ENCODE measurements at regions of chrX and their contacts with region 1.

Region 1: DNA sequence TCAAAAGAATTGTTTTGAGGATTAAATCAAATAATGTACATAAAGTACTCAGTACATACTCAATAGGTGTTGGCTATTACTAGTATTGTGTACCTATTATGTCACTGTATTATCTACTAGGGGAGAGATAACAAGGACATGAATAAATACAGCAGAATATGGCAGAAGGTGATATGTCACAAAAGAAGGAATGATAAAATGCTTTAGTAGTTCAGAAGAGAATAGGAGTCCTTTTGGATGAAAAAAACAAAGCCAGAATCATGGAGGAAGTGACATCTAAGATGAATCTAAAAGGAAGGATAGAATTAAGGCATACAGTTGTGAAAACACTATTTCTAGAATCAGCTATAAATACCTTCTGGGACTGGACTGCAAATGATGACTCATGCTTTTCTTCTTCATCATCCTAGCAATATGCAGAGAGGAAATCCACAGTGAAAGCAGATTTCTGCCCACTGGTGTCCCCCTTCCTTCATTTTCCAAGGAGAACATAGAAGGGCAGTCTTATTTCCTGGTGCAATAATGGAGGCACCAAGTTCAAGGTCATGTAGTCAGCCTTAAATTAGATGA is 98.7 kb downstream of the GLUD2 start:
- DNase-seq: no peak
- ATAC-seq: no peak
- H3K4me3 ChIP-seq: no peak overlapping the region
- H3K27ac ChIP-seq: no peak overlapping the region
- H3K4me1 ChIP-seq: no peaks in the 10 kb centered on the region
- H3K27me3 ChIP-seq: no peaks in the 10 kb centered on the region

Region 2: DNA sequence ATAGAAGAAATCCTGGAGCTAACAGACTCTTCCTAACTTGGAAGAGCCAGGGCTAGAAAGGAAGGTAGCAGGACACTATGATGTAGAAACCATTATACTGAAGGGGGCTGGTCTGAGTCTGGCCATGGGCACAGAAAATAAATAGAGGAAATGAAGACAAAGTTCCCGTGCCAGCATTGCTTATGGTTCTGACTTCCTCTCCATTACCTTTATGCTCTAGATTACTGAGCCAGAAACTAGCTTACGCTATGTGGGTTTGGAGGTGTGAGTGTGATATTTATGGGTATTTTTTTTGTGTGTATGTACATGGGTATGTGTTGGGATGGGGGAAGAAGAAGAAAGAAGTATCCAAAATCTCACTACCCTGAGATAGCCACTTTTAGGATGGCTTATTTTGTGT is 49.6 kb after region 1 on chrX:
- intact Hi-C with region 1: loop called in 1 of 2 experiments (anchors 2 kb)
- DNase-seq: no peak
- ATAC-seq: no peak
- H3K4me3 ChIP-seq: no peak overlapping the region
- H3K27ac ChIP-seq: no peak overlapping the region
- H3K4me1 ChIP-seq: no peaks in the 10 kb centered on the region
- H3K27me3 ChIP-seq: no peaks in the 10 kb centered on the region

Measured in aorta (tissue), 5 donors.